Activated CD8-positive, alpha-beta memory T cell treated with anti-CD3 and anti-CD28 coated beads, Interleukin-2, amount 10 ng/mL, durations not matched to agents 7 days and 5 days (primary cell): ENCODE measurements at regions of chr9 and their contacts with region 1.

Region 1: GRCh38 chr9:97921959-97922724 is at the start of gene TRMO:
- DNase-seq: peak; percentile 98
- ATAC-seq: peak; percentile 83
- H3K4me3 Mint-ChIP-seq: peak within 1 kb of the TSS; percentile 82
- H3K27ac Mint-ChIP-seq: peak within 1 kb of the TSS; percentile 97
- H3K4me1 Mint-ChIP-seq: peaks cover 53% of the 10 kb centered on the region
- H3K27me3 Mint-ChIP-seq: peaks cover 3% of the 10 kb centered on the region
- total RNA-seq, gene TRMO: 14.9 to 15.4 TPM

Region 2: DNA sequence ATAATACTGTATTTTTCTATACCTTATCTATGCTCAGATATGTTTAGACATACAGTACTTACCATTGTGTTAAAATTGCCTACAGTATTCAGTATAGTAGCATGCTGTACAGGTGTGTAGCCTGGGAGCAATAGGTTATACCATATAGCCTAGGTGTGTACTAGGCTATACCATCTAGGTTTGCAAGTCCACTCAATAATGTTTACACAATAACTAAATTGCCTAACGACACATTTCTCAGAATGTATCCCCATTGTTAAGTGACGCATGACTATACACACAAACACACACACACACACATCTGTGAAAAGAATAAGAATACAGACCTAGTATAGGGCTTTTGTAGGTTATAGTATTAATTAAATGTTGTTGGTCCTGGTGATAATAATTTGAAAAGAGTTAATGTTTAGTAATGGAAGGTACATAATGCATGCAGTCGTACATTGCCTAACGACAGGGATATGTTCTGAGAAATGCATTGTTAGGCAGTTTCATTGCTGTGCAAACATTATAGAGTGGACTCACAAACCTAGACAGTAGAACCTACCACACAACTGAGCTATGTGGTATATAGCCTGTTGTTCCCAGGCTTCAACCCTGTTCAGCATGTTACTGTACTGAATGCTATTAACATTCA is 496.7 kb before region 1 on chr9:
- CTCF ChIA-PET with region 1: no interaction called
- DNase-seq: no peak
- ATAC-seq: no peak
- H3K4me3 Mint-ChIP-seq: no peak overlapping the region
- H3K27ac Mint-ChIP-seq: no peak overlapping the region
- H3K4me1 Mint-ChIP-seq: peaks cover 1% of the 10 kb centered on the region
- H3K27me3 Mint-ChIP-seq: no peaks in the 10 kb centered on the region

Region 3: GRCh38 chr9:97876061-97876460 is 46.1 kb before region 1 on chr9:
- CTCF ChIA-PET with region 1: no interaction called
- DNase-seq: no peak
- ATAC-seq: no peak
- H3K4me3 Mint-ChIP-seq: no peak overlapping the region
- H3K27ac Mint-ChIP-seq: no peak overlapping the region
- H3K4me1 Mint-ChIP-seq: no peaks in the 10 kb centered on the region
- H3K27me3 Mint-ChIP-seq: peaks cover 10% of the 10 kb centered on the region

Region 4: GRCh38 chr9:97890038-97890437 is 32.1 kb before region 1 on chr9:
- CTCF ChIA-PET with region 1: interaction called, 40 read pairs
- DNase-seq: peak; percentile 71
- ATAC-seq: peak; percentile 65
- H3K4me3 Mint-ChIP-seq: no peak overlapping the region
- H3K27ac Mint-ChIP-seq: no peak overlapping the region
- H3K4me1 Mint-ChIP-seq: no peaks in the 10 kb centered on the region
- H3K27me3 Mint-ChIP-seq: no peaks in the 10 kb centered on the region

Region 5: DNA sequence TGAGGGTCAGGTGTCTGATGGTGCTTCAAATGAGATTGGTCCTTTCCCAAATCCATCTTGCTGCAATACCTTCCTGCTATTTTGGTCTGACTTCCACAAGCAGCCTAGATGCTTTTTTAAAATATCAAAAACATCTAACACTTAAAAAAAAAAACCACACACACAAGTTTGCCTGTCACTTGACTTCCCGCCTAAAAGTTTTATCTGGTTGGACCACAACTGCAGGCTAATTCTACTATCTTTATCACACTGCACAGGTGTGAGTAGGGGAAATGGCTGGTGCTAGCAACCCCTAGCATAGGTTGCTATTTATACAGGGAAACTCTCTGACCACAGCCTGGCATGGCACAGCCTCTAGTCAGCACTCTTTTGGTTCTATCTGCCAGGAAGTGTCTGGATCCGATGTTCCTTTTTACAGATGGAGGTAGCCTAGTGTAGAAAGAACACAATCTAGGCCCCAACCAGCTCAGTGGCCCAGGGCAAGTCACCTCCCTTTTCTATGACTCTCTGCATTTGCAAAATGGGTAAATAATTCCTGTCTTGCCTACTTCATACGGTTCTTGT is 16.0 kb after region 1 on chr9 and contains the start of gene HEMGN:
- CTCF ChIA-PET with region 1: interaction called, 31 read pairs
- DNase-seq: peak; percentile 59
- ATAC-seq: peak; percentile 66
- H3K4me3 Mint-ChIP-seq: no peak within 1 kb of the TSS
- H3K27ac Mint-ChIP-seq: peak within 1 kb of the TSS; percentile 40
- H3K4me1 Mint-ChIP-seq: peaks cover 16% of the 10 kb centered on the region
- H3K27me3 Mint-ChIP-seq: no peaks in the 10 kb centered on the region
- total RNA-seq, gene HEMGN: 0.23 to 0.47 TPM

Region 6: GRCh38 chr9:97964901-97965300 is 42.8 kb after region 1 on chr9:
- CTCF ChIA-PET with region 1: interaction called, 26 read pairs
- DNase-seq: no peak
- ATAC-seq: no peak
- H3K4me3 Mint-ChIP-seq: no peak overlapping the region
- H3K27ac Mint-ChIP-seq: no peak overlapping the region
- H3K4me1 Mint-ChIP-seq: peaks cover 5% of the 10 kb centered on the region
- H3K27me3 Mint-ChIP-seq: peaks cover 8% of the 10 kb centered on the region

Region 7: DNA sequence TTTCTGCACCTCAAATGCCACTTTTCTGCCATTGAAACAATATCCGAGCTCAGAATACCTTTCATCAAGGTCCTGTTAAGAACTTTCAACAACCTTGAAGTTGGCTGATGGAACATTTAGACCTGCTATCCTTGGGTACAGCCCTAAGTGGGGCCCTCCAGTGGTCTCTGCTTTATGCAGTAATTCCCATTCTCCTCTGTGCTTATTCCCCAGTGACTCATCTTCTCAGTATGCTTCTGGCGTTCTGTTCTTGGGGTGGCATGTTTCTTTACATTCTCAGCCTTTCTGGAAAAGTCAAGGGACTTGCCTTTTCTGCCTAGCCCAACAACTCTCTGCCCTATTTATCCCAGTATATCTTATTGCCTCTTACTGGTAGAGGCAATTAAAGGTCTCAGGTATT is 68.1 kb after region 1 on chr9:
- CTCF ChIA-PET with region 1: interaction called, 99 read pairs
- DNase-seq: no peak
- ATAC-seq: no peak
- H3K4me3 Mint-ChIP-seq: no peak overlapping the region
- H3K27ac Mint-ChIP-seq: peak overlapping the region; percentile 64
- H3K4me1 Mint-ChIP-seq: peaks cover 89% of the 10 kb centered on the region
- H3K27me3 Mint-ChIP-seq: no peaks in the 10 kb centered on the region

Region 8: GRCh38 chr9:98056269-98057137 is 134.4 kb after region 1 on chr9 and contains the start of gene NANS:
- CTCF ChIA-PET with region 1: interaction called, 10 read pairs
- DNase-seq: peak; percentile 96
- ATAC-seq: peak; percentile 96
- H3K4me3 Mint-ChIP-seq: peak within 1 kb of the TSS; percentile 92
- H3K27ac Mint-ChIP-seq: peak within 1 kb of the TSS; percentile 95
- H3K4me1 Mint-ChIP-seq: peaks cover 43% of the 10 kb centered on the region
- H3K27me3 Mint-ChIP-seq: no peaks in the 10 kb centered on the region
- total RNA-seq, gene NANS: 35.5 to 47.8 TPM

Region 9: GRCh38 chr9:98067184-98067583 is 145.0 kb after region 1 on chr9:
- CTCF ChIA-PET with region 1: no interaction called
- DNase-seq: no peak
- ATAC-seq: no peak
- H3K4me3 Mint-ChIP-seq: no peak overlapping the region
- H3K27ac Mint-ChIP-seq: no peak overlapping the region
- H3K4me1 Mint-ChIP-seq: peaks cover 8% of the 10 kb centered on the region
- H3K27me3 Mint-ChIP-seq: no peaks in the 10 kb centered on the region